CD8-positive, alpha-beta memory T cell (primary cell): ENCODE measurements at regions of chr1 and their contacts with region 1.

Region 1: GRCh38 chr1:91511386-91511785 is 10.7 kb downstream of the CDC7 start:
- DNase-seq: peak in 2 of 5 donors; percentile 32 to 37
- H3K4me3 ChIP-seq: no peak overlapping the region
- H3K4me3 Mint-ChIP-seq: no peak overlapping the region
- H3K27ac ChIP-seq: no peak overlapping the region
- H3K27ac Mint-ChIP-seq: peak overlapping the region in 4 of 8 donors; percentile 9 to 53 (median 28)
- H3K4me1 ChIP-seq: no peaks in the 10 kb centered on the region
- H3K4me1 Mint-ChIP-seq: peaks cover 8 to 50% (median 13%) of the 10 kb centered on the region in 3 donors
- H3K27me3 ChIP-seq: no peaks in the 10 kb centered on the region
- H3K27me3 Mint-ChIP-seq: peaks cover 0 to 1% of the 10 kb centered on the region in 2 donors

Region 2: GRCh38 chr1:91500756-91501522 is 10.4 kb before region 1 on chr1 and contains the start of gene CDC7:
- CTCF ChIA-PET with region 1: interaction called, 14 read pairs
- POLR2A ChIA-PET with region 1: interaction called, 4 read pairs
- DNase-seq: peak; percentile 66 to 89 (median 84)
- H3K4me3 ChIP-seq: peak within 1 kb of the TSS; percentile 91
- H3K4me3 Mint-ChIP-seq: no peak within 1 kb of the TSS
- H3K27ac ChIP-seq: peak within 1 kb of the TSS; percentile 70
- H3K27ac Mint-ChIP-seq: no peak within 1 kb of the TSS
- H3K4me1 ChIP-seq: peaks cover 10% of the 10 kb centered on the region
- H3K4me1 Mint-ChIP-seq: peaks cover 22 to 35% (median 34%) of the 10 kb centered on the region in 3 donors
- H3K27me3 ChIP-seq: no peaks in the 10 kb centered on the region
- H3K27me3 Mint-ChIP-seq: no peaks in the 10 kb centered on the region
- total RNA-seq, gene CDC7: 24.5 to 28.3 TPM

Region 3: DNA sequence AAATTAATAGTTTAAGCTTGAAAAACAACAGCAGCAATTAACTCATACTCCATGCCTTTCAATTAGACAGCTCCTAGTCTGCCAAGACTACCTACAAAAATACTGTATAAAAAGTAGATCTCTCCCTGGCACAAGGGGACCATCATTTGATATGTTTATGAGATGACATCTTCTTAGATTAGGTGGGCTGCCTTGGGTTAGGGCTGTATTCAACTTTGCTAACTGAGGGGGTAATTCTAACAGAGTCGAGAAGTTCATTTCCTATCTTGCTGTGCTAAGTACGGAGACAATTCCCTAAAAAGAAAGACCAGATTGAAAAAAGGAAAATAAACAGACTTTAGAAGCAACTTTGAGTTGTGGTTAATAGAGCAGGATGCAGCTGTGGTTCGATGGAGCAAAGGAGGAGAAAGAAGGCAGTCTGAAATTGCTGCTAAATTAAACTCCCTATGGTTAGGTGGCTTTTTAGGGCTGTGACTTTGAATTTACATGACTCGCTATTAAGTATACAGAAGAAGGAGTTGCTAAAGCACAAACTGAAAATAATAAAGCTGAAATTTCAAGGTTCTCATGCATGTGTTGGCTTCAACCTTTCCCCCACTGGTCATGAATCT is 64.6 kb after region 1 on chr1:
- CTCF ChIA-PET with region 1: interaction called, 11 read pairs
- POLR2A ChIA-PET with region 1: no interaction called
- DNase-seq: no peak
- H3K4me3 ChIP-seq: no peak overlapping the region
- H3K4me3 Mint-ChIP-seq: peak overlapping the region in 2 of 7 donors; percentile 3 to 4
- H3K27ac ChIP-seq: no peak overlapping the region
- H3K27ac Mint-ChIP-seq: peak overlapping the region in 3 of 8 donors; percentile 16 to 43 (median 35)
- H3K4me1 ChIP-seq: peaks cover 11% of the 10 kb centered on the region
- H3K4me1 Mint-ChIP-seq: peaks cover 25 to 44% (median 32%) of the 10 kb centered on the region in 3 donors
- H3K27me3 ChIP-seq: no peaks in the 10 kb centered on the region
- H3K27me3 Mint-ChIP-seq: no peaks in the 10 kb centered on the region

Region 4: DNA sequence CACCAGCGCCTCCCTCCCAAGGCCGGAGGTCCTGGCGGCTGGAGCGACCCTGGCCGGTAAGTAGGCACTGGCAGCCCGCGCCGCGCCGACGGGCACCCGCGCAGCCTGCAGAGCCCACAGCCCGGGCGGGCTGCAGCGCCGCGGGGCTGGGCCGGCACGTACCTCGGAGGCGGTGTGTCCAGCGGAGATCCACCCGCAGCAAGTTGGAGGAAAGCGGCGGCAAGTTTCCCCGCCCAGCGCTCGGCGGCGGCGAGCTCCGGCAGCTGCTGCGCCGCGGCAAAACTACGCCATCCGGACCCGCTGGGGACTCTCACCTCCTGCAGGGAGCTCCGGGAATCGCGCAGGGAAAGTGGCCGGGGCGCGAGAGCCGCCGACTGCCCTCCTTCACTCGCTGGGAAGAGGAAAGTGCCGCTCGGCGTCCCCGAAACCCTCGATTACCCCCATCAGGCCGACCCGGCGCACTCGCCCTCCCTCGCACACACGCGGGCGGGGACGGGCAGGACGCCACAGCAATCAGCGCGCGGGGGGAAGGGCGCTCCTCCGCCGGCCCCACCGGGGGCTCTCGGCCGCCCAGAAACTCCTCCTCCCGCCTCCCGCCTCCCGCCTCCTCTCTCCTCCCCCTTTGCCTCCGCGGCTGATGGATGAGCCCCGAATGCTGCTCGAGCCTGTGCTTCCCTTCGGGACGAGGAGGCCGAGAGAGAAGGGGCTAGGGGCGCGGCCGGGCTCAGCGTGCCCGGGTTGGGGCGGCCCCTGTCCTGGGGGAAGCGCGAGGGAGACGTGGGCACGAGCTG is 374.5 kb after region 1 on chr1 and contains the start of gene TGFBR3:
- CTCF ChIA-PET with region 1: interaction called, 37 read pairs
- POLR2A ChIA-PET with region 1: interaction called, 4 read pairs
- DNase-seq: peak; percentile 75 to 81 (median 78)
- H3K4me3 ChIP-seq: peak within 1 kb of the TSS; percentile 69
- H3K4me3 Mint-ChIP-seq: peak within 1 kb of the TSS; percentile 94 to 99 (median 98)
- H3K27ac ChIP-seq: peak within 1 kb of the TSS; percentile 71
- H3K27ac Mint-ChIP-seq: peak within 1 kb of the TSS; percentile 69 to 99 (median 92)
- H3K4me1 ChIP-seq: peaks cover 17% of the 10 kb centered on the region
- H3K4me1 Mint-ChIP-seq: peaks cover 41 to 52% (median 51%) of the 10 kb centered on the region in 3 donors
- H3K27me3 ChIP-seq: no peaks in the 10 kb centered on the region
- H3K27me3 Mint-ChIP-seq: peaks cover 0 to 2% of the 10 kb centered on the region in 2 donors
- total RNA-seq, gene TGFBR3: 28.8 to 29.9 TPM

Region 5: DNA sequence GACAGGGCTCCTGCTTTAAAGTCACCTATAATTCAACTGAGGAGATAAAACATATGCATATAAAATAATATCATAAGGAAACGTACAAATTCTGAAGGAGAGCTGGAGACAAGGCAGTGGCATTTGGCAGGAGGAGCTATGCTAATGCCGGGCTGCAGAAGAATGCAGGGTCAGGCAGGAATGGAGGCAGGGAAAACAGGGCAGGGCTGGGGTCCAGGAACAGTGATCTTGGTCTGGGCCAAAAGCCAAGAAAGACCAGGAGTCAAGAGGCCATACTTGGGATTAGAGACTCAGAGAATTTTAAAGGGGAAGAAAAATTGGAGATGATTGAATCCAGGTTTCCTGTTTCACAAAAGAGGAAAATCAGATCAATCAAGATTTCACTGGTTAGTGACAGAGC is 417.9 kb after region 1 on chr1:
- CTCF ChIA-PET with region 1: interaction called, 75 read pairs
- POLR2A ChIA-PET with region 1: interaction called, 3 read pairs
- DNase-seq: no peak
- H3K4me3 ChIP-seq: no peak overlapping the region
- H3K4me3 Mint-ChIP-seq: no peak overlapping the region
- H3K27ac ChIP-seq: no peak overlapping the region
- H3K27ac Mint-ChIP-seq: peak overlapping the region in 2 of 8 donors; percentile 3 to 47
- H3K4me1 ChIP-seq: no peaks in the 10 kb centered on the region
- H3K4me1 Mint-ChIP-seq: peaks cover 0 to 2% (median under 1%) of the 10 kb centered on the region in 3 donors
- H3K27me3 ChIP-seq: no peaks in the 10 kb centered on the region
- H3K27me3 Mint-ChIP-seq: no peaks in the 10 kb centered on the region